Breast epithelium (tissue), 4 donors: ENCODE measurements at regions of chr9 and their contacts with region 1.

Region 1: GRCh38 chr9:95511952-95512708 is 4.6 kb downstream of the PTCH1 start:
- DNase-seq: no peak
- H3K4me3 ChIP-seq: peak overlapping the region; percentile 71 to 83 (median 75)
- H3K27ac ChIP-seq: peak overlapping the region; percentile 82 to 94
- H3K4me1 ChIP-seq: peaks cover 4% of the 10 kb centered on the region in 2 donors
- H3K27me3 ChIP-seq: no peaks in the 10 kb centered on the region
- CTCF ChIP-seq: no peak
- POLR2A ChIP-seq: no peak

Region 2: GRCh38 chr9:95491543-95492320 is 20.4 kb before region 1 on chr9:
- intact Hi-C with region 1: loop called (anchors 1 kb)
- DNase-seq: no peak
- H3K4me3 ChIP-seq: no peak overlapping the region
- H3K27ac ChIP-seq: no peak overlapping the region
- H3K4me1 ChIP-seq: peaks cover 0 to 5% of the 10 kb centered on the region in 2 donors
- H3K27me3 ChIP-seq: no peaks in the 10 kb centered on the region
- CTCF ChIP-seq: no peak
- POLR2A ChIP-seq: no peak